Activated B cell treated with CpG ODN at 0.5 μM for 24 hours (primary cell): ENCODE measurements at regions of chr1 and their contacts with region 1.

Region 1: DNA sequence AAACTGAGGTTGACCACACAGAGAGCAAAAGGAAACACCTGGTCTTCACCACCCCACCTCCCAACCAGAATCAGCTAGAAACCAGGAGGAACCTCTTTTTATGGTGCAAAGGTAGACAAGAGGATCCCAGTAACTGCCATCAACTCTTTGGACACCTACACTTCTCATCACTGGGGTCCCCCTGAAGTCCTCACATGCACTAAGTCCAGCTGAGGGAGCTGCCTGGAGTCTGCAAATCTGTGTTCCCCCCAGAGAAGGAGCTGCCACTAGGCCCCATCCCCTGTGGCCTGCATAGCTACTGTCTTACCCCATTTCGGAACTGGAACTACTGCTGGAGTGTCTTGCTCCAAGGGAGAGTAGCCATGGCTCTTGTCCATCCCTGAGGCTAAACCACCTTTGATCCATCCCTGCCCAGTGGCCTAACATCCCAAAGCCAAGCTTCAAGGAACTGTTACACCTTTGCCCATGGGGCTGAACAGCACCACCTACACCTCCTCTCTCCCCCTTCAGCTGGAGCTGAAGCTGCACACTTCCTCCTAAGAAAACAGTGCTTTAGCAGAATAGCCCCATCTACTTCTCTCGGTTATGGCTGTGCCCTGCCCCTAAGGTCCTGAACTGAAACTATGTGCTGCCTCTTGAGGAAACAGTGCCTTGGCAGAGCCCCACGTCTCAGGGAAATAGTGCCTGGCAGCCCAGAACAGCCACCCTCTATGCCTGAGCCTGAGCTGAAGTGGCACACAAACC is 85.4 kb upstream of the CD53 start:
- DNase-seq: peak; percentile 49
- ATAC-seq: peak; percentile 85
- H3K4me3 Mint-ChIP-seq: peak overlapping the region; percentile 70
- H3K27ac Mint-ChIP-seq: peak overlapping the region; percentile 95
- H3K4me1 Mint-ChIP-seq: peaks cover 70% of the 10 kb centered on the region
- H3K27me3 Mint-ChIP-seq: no peaks in the 10 kb centered on the region
- CTCF ChIP-seq: no peak

Region 2: DNA sequence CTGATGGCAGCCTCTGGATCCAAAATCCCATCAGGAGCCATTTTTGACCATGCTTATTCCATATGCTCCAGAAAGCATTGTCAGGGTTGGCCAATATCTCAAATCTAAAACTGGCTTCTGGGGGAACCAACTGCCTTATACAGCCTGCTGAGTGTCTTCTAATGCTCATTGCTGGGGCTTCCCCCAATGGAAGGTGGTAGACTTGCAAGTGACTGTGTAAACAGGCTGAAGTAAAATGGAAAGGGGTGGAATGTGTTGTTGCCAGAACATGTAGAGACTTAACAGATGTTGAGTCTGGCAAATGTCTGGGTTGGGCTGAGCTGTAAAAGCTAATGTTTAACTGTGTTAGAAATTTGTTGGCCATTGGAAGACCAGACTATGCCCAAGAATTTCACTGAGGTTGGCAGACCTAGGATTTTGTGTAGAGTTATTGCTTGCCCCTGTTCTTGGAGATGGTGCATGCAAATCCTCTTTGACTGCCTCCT is 198.9 kb after region 1 on chr1:
- CTCF ChIA-PET with region 1: interaction called, 28 read pairs
- POLR2A ChIA-PET with region 1: no interaction called
- intact Hi-C with region 1: no loop called
- DNase-seq: no peak
- ATAC-seq: no peak
- H3K4me3 Mint-ChIP-seq: no peak overlapping the region
- H3K27ac Mint-ChIP-seq: no peak overlapping the region
- H3K4me1 Mint-ChIP-seq: peaks cover 6% of the 10 kb centered on the region
- H3K27me3 Mint-ChIP-seq: peaks cover 11% of the 10 kb centered on the region
- CTCF ChIP-seq: no peak